PC-9 (cell line): ENCODE measurements at regions of chrX and their contacts with region 1.

Region 1: GRCh38 chrX:18886344-18887161 is 97.4 kb downstream of the PHKA2 start:
- DNase-seq: peak; percentile 76 to 80
- H3K4me3 ChIP-seq: peak overlapping the region; percentile 51
- H3K27ac ChIP-seq: no peak overlapping the region
- H3K4me1 ChIP-seq: peaks cover 8% of the 10 kb centered on the region; the same call in 1 of the 2 replicates
- H3K27me3 ChIP-seq: no peaks in the 10 kb centered on the region
- CTCF ChIP-seq: peak; percentile 68

Region 2: DNA sequence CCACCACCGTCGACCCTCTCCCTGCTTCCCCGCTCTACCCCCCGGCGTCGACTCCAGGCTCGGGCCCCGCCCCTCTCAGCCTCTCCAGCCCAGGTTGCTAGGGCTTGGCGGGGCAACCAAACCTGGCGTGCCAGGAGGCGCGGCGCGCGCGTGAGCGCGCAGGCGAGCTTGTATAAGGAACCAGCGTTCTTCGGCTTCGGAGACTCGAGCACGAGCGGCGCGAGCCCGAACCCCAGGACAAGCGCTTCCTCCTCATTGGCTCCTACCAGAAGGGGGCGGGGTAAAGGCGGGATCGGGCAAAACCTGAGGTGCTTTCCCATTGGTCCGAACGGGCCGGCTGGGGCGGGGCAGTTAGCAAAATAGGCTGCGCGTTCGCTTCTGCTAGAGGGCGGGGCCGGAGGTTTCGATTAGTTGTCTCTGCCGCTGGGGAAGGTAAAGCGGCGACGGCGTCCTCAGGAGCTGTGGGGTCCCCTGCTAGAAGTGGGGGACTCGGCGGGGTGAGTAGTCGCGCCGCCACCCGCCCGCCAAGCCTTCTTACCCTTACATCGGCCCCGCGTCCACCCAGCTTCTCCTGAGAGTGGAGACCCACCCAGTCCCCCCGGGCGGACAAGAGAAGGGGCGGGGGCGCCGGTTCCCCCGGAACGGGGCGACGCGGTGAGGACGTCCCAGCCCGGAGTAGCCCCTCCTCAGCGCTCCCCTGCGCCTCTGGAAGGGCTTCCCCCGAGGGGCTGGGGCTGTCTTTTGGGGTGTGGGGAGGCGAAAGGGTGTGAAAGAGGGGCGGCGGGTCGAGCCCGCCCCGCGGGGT is 461.2 kb before region 1 on chrX and contains the start of gene CDKL5:
- CTCF ChIA-PET with region 1: no interaction called
- POLR2A ChIA-PET with region 1: no interaction called
- intact Hi-C with region 1: loop called (anchors 2 kb)
- DNase-seq: peak; percentile 93 to 96
- H3K4me3 ChIP-seq: peak within 1 kb of the TSS; percentile 66
- H3K27ac ChIP-seq: no peak within 1 kb of the TSS
- H3K4me1 ChIP-seq: peaks cover 3% of the 10 kb centered on the region
- H3K27me3 ChIP-seq: no peaks in the 10 kb centered on the region
- CTCF ChIP-seq: no peak
- total RNA-seq, gene CDKL5: 4.2 and 5.0 TPM in 2 replicates

Region 3: GRCh38 chrX:18468599-18468998 is 418.0 kb before region 1 on chrX:
- CTCF ChIA-PET with region 1: no interaction called
- POLR2A ChIA-PET with region 1: no interaction called
- intact Hi-C with region 1: no loop called
- DNase-seq: no peak
- H3K4me3 ChIP-seq: no peak overlapping the region
- H3K27ac ChIP-seq: no peak overlapping the region
- H3K4me1 ChIP-seq: peaks cover 7% of the 10 kb centered on the region
- H3K27me3 ChIP-seq: no peaks in the 10 kb centered on the region
- CTCF ChIP-seq: no peak

Region 4: DNA sequence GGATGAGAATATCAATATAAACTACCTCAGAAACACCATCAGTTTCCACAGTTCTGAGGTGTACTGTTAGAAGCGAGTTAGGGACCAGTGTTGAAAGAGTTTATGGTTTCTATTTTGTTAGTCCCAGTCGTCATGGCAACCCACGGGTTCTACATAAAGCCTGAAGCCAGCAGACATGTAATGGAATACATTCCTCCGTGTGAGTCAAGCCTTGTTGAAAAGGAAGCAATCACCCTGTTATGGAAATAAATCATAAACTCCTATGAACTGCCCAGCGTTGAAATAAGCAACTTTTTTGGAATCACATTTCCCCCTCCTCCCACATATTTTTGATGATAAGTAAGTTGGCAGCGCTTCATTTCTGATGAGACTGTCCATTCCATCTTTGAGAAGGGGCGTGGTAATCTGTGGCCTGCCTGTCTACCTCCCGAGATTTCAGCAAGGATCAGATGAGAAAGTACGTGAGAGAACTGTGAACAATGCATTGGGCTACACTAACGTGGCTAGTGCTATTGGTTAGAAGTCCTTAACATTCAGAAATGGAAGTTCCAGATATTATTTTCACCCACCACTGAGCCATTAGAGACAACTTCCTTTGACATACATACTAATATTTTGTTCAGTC is 416.8 kb after region 1 on chrX:
- CTCF ChIA-PET with region 1: no interaction called
- POLR2A ChIA-PET with region 1: no interaction called
- intact Hi-C with region 1: no loop called
- DNase-seq: peak in 1 of 2 experiments; percentile 43
- H3K4me3 ChIP-seq: no peak overlapping the region
- H3K27ac ChIP-seq: no peak overlapping the region
- H3K4me1 ChIP-seq: no peaks in the 10 kb centered on the region
- H3K27me3 ChIP-seq: peaks cover 56% of the 10 kb centered on the region
- CTCF ChIP-seq: no peak